Activated CD4-positive, alpha-beta memory T cell treated with anti-CD3 and anti-CD28 coated beads for 36 hours (primary cell): ENCODE measurements at regions of chrX and their contacts with region 1.

Region 1: DNA sequence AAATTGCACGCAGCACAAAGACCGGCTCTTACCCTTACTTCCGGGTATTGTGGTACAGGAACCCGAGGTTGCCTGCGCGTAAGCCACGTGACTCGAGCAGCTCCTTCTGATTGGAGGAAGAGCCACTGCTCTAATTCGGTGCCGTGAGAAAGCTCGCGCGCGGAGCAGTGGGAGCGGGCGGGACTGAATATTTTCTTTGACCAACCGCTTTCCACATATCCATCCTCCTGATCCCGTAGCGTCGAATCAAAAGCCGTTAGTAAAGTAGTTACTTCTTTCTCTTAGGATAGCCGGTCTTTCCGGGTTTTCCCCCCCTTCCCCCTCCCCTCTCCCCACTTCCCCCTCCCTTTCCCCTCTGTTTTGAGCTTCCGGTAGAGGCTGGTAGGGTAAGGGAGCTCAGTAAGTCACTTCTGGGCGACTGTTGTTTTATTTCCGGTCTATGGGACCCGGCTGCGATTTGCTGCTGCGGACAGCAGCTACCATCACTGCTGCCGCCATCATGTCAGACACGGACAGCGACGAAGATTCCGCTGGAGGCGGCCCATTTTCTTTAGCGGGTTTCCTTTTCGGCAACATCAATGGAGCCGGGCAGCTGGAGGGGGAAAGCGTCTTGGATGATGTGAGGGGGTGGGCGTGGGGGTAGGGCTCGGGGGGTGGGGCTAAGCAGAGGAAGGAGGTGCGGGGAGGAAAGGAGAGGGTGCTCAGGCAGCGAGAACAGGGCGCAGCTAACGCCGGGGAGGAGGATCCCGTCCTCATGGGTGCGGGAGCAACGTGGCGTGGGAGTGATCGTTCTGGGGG is at the start of gene TAF1:
- DNase-seq: peak; percentile 95
- H3K4me3 Mint-ChIP-seq: peak within 1 kb of the TSS; percentile 91
- H3K27ac Mint-ChIP-seq: peak within 1 kb of the TSS; percentile 99
- H3K4me1 Mint-ChIP-seq: peaks cover 17% of the 10 kb centered on the region
- H3K27me3 Mint-ChIP-seq: no peaks in the 10 kb centered on the region
- total RNA-seq, gene TAF1: 24.3 to 26.3 TPM

Region 2: DNA sequence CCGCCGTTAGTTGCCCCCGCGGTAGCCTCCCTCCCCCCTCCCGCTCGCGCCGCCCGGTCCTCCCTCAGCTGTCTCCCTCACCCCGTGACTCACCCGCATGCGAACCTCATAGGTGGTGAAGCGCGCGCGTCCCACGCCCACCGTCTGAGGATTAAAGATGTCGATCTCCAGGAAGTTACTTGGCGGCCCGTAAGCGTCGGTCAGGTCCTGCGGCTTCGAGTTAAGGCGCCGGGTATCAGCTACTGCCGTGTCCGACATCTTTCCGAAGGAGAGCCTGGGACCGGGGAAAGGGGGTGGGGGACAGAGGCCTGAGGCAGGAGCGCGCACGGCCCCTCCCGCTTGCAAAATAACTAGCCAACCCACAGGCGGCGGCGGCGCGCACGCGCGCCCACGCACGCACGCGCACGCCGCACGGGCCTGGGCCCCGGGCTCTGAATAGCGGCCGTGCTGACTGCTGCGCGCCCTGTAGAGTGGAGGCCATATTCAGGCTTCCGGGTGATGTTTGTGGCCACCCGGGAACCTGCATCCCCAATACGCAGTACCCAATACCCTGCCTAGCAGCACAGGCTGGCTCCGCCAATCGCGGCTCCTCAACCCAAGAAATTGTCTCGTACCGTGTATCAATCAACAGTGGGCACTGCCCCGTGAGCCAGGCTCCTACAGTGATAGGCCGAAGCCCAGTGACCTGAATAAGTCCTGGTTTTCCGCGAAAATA is 297.9 kb before region 1 on chrX and contains the start of gene SNX12:
- CTCF ChIA-PET with region 1: no interaction called
- POLR2A ChIA-PET with region 1: interaction called, 4 read pairs
- intact Hi-C with region 1: loop called (anchors 1 kb)
- DNase-seq: peak; percentile 94
- H3K4me3 Mint-ChIP-seq: peak within 1 kb of the TSS; percentile 95
- H3K27ac Mint-ChIP-seq: peak within 1 kb of the TSS; percentile 97
- H3K4me1 Mint-ChIP-seq: peaks cover 18% of the 10 kb centered on the region
- H3K27me3 Mint-ChIP-seq: no peaks in the 10 kb centered on the region
- total RNA-seq, gene SNX12: 42.1 to 42.5 TPM

Region 3: GRCh38 chrX:71095543-71095911 is 270.5 kb before region 1 on chrX and contains the start of gene FOXO4:
- CTCF ChIA-PET with region 1: no interaction called
- POLR2A ChIA-PET with region 1: no interaction called
- intact Hi-C with region 1: loop called (anchors 5 kb)
- DNase-seq: peak; percentile 92
- H3K4me3 Mint-ChIP-seq: peak within 1 kb of the TSS; percentile 84
- H3K27ac Mint-ChIP-seq: peak within 1 kb of the TSS; percentile 85
- H3K4me1 Mint-ChIP-seq: peaks cover 23% of the 10 kb centered on the region
- H3K27me3 Mint-ChIP-seq: no peaks in the 10 kb centered on the region
- total RNA-seq, gene FOXO4: 8.7 to 10.7 TPM

Region 4: GRCh38 chrX:71111141-71111843 is 254.8 kb before region 1 on chrX and contains the start of gene IL2RG:
- CTCF ChIA-PET with region 1: no interaction called
- POLR2A ChIA-PET with region 1: no interaction called
- intact Hi-C with region 1: loop called (anchors 5 kb)
- DNase-seq: peak; percentile 85
- H3K4me3 Mint-ChIP-seq: peak within 1 kb of the TSS; percentile 99
- H3K27ac Mint-ChIP-seq: peak within 1 kb of the TSS; percentile 98
- H3K4me1 Mint-ChIP-seq: peaks cover 38% of the 10 kb centered on the region
- H3K27me3 Mint-ChIP-seq: no peaks in the 10 kb centered on the region
- total RNA-seq, gene IL2RG: 289 to 290 TPM

Region 5: DNA sequence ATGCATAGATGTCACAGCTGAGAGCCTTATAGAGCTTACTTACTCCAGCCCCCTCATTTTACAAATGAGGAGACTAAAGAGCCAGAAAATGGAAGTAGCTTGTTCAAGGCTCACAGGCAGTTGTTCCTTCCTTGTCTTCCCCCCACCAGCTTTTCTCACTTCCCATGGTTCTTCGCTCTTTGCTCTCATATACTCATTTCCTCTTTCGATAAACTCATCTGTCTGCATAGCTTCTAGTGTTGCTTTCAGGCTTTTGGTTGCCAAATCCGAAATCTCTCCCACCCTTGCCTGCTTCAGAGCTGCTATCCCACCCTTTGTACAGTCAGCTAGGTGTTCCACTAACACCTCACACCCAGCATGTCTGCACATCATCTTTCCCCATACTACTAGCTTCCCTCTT is 168.0 kb before region 1 on chrX:
- CTCF ChIA-PET with region 1: no interaction called
- POLR2A ChIA-PET with region 1: no interaction called
- intact Hi-C with region 1: loop called (anchors 5 kb)
- DNase-seq: peak; percentile 27
- H3K4me3 Mint-ChIP-seq: peak overlapping the region; percentile 92
- H3K27ac Mint-ChIP-seq: peak overlapping the region; percentile 93
- H3K4me1 Mint-ChIP-seq: peaks cover 3% of the 10 kb centered on the region
- H3K27me3 Mint-ChIP-seq: no peaks in the 10 kb centered on the region

Region 6: DNA sequence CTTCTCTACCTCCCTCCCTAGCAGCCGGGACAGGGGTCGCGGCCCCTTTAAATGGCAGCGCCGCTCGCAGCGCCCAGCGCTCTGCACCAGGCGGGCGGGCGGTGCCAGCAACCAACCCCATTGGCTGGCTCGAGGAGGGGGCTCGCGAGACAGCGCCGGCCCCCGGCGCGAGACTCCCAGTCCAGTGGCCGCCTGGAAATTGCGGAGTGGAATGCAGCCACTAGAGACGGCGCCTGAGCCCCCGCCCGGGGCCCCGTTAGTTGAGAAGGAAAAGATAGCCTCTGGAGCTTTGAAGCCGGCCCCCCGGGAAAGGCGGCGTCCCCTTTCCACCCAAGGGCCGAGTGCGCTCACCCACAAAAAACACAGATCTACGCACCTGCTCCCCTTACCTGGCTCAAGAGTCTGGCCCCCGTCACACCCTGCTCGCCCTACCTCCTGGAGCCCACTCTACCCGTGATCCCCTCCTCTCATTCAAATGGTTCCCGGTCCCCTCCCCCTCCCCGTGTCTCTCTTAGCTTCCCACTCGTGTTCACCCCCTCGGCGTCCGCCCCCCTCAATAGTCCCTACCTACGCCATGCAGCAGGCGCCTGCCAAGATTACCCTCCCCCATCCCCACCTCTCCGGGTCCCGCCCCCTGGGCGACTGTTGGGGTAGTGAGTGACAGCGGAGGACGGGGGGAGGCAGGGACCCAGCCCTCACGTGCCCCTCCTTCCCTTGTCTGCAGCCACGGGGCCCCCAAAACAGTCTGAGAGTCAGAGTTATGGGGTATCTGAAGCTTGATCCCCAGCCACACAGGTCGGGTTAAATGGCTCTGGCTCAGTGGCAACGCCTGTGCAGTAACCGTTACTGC is 111.8 kb before region 1 on chrX and contains the start of gene ZMYM3:
- CTCF ChIA-PET with region 1: no interaction called
- POLR2A ChIA-PET with region 1: no interaction called
- intact Hi-C with region 1: loop called (anchors 1 kb)
- DNase-seq: peak; percentile 84
- H3K4me3 Mint-ChIP-seq: peak within 1 kb of the TSS; percentile 86
- H3K27ac Mint-ChIP-seq: peak within 1 kb of the TSS; percentile 73
- H3K4me1 Mint-ChIP-seq: peaks cover 25% of the 10 kb centered on the region
- H3K27me3 Mint-ChIP-seq: no peaks in the 10 kb centered on the region
- total RNA-seq, gene ZMYM3: 17.2 to 17.5 TPM

Region 7: DNA sequence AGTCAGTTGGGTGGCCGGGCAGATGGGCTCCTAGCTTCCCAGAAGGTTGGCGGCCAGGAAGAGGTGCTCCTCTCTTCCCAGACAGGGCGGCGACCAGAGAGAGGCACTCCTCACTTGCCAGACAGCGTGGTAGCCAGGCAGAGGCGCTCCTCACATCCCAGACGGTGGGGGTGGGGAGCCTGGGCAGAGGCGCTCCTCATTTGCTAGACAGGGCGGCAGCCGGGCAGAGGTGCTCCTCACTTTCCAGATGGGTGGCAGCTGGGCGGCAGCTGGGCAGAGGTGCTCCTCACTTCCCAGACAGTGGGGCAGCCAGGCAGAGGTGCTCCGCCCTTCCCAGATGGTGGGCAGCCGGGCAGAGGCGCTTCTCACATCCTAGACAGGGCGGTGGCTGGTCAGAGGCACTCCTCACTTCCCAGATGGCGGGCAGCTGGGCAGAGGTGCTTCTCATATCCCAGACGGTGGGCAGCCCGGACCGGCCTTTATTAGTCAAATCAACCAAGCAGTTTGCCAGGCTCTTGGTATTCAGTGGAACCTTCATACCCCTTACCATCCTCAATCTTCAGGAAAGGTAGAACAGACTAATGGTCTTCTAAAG is 96.2 kb before region 1 on chrX:
- CTCF ChIA-PET with region 1: no interaction called
- POLR2A ChIA-PET with region 1: no interaction called
- intact Hi-C with region 1: no loop called
- DNase-seq: no peak
- H3K4me3 Mint-ChIP-seq: no peak overlapping the region
- H3K27ac Mint-ChIP-seq: no peak overlapping the region
- H3K4me1 Mint-ChIP-seq: no peaks in the 10 kb centered on the region
- H3K27me3 Mint-ChIP-seq: no peaks in the 10 kb centered on the region

Region 8: GRCh38 chrX:71283403-71284143 is 82.5 kb before region 1 on chrX and contains the start of gene NONO:
- CTCF ChIA-PET with region 1: interaction called, 5 read pairs
- POLR2A ChIA-PET with region 1: interaction called, 23 read pairs
- intact Hi-C with region 1: loop called (anchors 1 kb)
- DNase-seq: peak; percentile 85
- H3K4me3 Mint-ChIP-seq: peak within 1 kb of the TSS; percentile 98
- H3K27ac Mint-ChIP-seq: peak within 1 kb of the TSS; percentile 100
- H3K4me1 Mint-ChIP-seq: peaks cover 10% of the 10 kb centered on the region
- H3K27me3 Mint-ChIP-seq: no peaks in the 10 kb centered on the region
- total RNA-seq, gene NONO: 450 to 460 TPM